ENCODE measurements at regions of chr11 and their contacts with region 1.

Region 1: GRCh38 chr11:12235947-12236743 is 125.8 kb downstream of the MICAL2 start:
- DNase-seq: peak in 1 of 2 experiments; percentile 68
- H3K4me3 ChIP-seq: no peak overlapping the region
- H3K4me3 Mint-ChIP-seq: no peak overlapping the region
- H3K27ac Mint-ChIP-seq: peak overlapping the region; percentile 75
- H3K4me1 ChIP-seq: peaks cover 68% of the 10 kb centered on the region
- H3K4me1 Mint-ChIP-seq: peaks cover 48% of the 10 kb centered on the region
- H3K27me3 ChIP-seq: no peaks in the 10 kb centered on the region
- H3K27me3 Mint-ChIP-seq: no peaks in the 10 kb centered on the region
- CTCF ChIP-seq: peak; percentile 62 to 70

Region 2: DNA sequence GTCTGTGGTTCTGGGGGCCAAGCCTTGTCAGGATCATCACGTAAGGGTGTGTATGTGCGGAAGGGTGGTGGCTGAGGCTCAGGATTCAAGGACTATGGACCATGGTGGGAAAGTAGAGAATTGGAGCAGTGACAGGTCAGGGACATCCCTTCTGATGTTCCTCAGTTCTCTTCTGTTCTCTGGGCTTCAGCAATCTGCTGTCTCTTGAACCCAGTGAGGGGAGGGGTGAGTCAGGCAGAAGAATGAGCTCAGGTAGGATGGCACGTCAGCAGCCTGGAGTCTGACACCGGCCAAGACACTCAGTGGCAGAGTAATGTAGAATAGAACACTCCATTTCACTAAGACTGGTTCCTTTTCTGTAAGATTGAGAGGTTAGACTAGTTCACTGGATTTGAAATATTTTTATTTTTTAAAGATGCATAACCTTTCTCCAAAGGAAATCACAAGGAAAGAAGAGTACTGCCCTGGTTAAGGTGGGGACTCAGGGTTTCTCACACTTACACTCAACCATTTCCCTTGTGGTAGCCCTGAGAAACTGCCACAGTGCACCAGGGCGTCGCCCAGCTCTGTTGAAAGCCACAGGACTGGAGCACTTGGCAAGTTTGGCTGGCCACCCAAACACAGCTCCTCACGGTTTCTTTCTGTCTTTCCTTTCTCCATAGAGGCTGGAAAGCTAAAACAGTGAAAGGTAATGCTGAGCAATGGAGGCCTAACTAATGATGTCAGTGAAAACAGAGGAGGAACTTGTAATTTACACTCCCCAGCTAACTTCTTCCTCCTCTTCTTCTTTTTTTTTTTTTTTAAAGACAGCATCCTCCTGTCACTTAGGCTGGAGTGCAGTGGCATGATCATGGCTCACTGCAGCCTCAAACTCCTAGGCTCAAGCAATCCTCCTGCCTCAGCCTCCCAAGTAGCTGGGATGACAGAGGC is 148.8 kb before region 1 on chr11:
- CTCF ChIA-PET with region 1: interaction called, 10 read pairs
- POLR2A ChIA-PET with region 1: no interaction called
- intact Hi-C with region 1: loop called (anchors 1 kb)
- DNase-seq: peak; percentile 34 to 42
- H3K4me3 ChIP-seq: no peak overlapping the region
- H3K4me3 Mint-ChIP-seq: no peak overlapping the region
- H3K27ac Mint-ChIP-seq: peak overlapping the region; percentile 78
- H3K4me1 ChIP-seq: peaks cover 73% of the 10 kb centered on the region
- H3K4me1 Mint-ChIP-seq: peaks cover 60% of the 10 kb centered on the region
- H3K27me3 ChIP-seq: no peaks in the 10 kb centered on the region
- H3K27me3 Mint-ChIP-seq: no peaks in the 10 kb centered on the region
- CTCF ChIP-seq: peak; percentile 7 to 11

Region 3: DNA sequence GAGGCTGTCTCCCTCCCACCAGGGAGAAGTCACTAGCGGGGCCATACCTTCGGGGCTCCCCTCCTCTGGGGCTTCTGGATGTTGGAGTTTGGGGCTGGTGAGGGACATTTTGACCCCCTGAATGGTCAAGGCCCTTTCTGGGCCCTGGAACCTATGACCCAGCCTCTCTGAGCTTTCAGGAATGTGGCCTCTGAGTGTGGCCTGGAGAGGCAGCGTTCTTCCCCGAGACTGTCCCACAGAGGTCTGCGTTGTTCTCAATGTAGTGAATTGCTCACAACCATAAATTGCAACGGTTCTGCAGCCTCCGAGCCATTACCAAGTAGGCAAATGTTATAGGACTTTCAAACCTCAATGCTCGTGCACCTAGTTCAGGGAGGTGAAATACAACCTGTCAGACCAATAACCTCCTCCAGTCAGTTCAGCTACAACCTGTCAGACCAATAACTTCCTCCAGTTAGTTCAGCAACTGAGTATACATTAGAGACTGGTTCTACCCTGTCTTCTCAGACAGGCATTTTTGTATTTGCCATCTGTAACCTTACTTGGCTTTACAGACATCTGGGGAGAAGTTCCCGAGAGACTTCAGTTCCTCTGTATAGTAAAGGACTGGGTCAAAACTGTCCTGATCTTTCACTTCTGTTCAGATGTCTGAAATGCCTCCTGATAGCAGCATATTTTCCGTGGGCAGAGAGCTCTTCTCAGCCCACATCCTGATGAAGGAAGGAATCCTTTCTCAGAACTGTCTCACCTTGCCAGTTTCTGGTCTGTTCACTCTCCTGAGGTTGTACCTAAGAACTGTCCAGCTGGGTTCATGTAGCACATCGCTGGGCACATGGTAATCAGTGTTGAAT is 91.6 kb before region 1 on chr11:
- CTCF ChIA-PET with region 1: interaction called, 5 read pairs
- POLR2A ChIA-PET with region 1: no interaction called
- intact Hi-C with region 1: loop called (anchors 1 kb)
- DNase-seq: peak; percentile 63 to 79
- H3K4me3 ChIP-seq: no peak overlapping the region
- H3K4me3 Mint-ChIP-seq: peak overlapping the region; percentile 57
- H3K27ac Mint-ChIP-seq: peak overlapping the region; percentile 83
- H3K4me1 ChIP-seq: peaks cover 79% of the 10 kb centered on the region
- H3K4me1 Mint-ChIP-seq: peaks cover 65% of the 10 kb centered on the region
- H3K27me3 ChIP-seq: no peaks in the 10 kb centered on the region
- H3K27me3 Mint-ChIP-seq: no peaks in the 10 kb centered on the region
- CTCF ChIP-seq: no peak

Region 4: DNA sequence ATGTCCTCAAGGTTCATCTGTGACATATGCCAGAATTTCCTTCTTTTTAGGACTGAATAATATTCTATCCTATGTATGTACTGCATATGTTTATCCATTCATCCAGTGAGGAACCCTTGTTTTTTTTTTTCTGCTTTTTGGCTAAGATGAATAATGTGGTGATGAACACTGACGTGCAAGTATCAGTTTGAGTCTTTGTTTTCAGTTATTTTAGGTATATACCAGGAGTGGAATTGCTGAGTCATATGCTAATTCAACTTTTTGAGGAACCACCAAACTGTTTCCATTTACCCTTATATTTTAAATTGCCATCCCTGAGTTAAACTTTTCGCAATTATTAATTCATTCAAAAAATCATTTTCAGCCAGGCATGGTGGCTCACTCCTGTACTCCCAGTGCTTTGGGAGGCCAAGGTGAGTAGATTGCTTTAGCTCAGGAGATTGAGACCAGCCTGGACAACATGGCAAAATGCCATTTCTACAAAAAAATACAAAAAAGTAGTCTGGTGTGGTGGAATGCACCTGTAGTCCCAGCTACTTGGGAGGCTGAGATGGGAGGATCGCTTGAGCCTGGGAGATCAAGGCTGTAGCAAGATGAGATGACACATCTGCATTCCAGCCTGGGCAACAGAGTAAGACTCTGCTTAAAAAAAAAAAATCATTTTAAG is 61.5 kb before region 1 on chr11:
- CTCF ChIA-PET with region 1: interaction called, 3 read pairs
- POLR2A ChIA-PET with region 1: no interaction called
- intact Hi-C with region 1: loop called (anchors 1 kb)
- DNase-seq: no peak
- H3K4me3 ChIP-seq: no peak overlapping the region
- H3K4me3 Mint-ChIP-seq: no peak overlapping the region
- H3K27ac Mint-ChIP-seq: peak overlapping the region; percentile 94
- H3K4me1 ChIP-seq: peaks cover 73% of the 10 kb centered on the region
- H3K4me1 Mint-ChIP-seq: peaks cover 45% of the 10 kb centered on the region
- H3K27me3 ChIP-seq: no peaks in the 10 kb centered on the region
- H3K27me3 Mint-ChIP-seq: no peaks in the 10 kb centered on the region
- CTCF ChIP-seq: no peak

Region 5: DNA sequence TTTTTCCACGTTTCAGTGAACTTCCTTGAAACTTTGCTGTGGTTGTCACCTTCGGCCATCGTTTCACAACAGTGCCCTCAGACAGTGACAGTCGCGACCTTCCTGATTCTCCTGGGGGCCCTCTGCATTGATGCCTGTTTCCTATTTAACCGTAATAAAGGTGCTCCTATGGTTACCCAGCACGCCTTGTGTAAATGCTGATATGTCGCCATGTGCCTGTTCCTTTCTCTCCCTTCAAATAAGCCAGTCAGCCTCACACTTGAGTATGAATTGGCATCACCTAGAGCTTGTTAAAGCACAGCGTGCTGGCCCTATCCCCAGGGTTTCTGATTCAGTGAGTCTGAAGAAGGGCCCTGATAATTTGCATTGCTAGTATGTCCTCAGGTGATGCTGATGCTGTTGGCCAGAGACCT is 21.0 kb before region 1 on chr11:
- CTCF ChIA-PET with region 1: interaction called, 3 read pairs
- POLR2A ChIA-PET with region 1: no interaction called
- intact Hi-C with region 1: loop called (anchors 2 kb)
- DNase-seq: peak; percentile 60 to 61
- H3K4me3 ChIP-seq: no peak overlapping the region
- H3K4me3 Mint-ChIP-seq: no peak overlapping the region
- H3K27ac Mint-ChIP-seq: peak overlapping the region; percentile 87
- H3K4me1 ChIP-seq: peaks cover 56% of the 10 kb centered on the region
- H3K4me1 Mint-ChIP-seq: peaks cover 53% of the 10 kb centered on the region
- H3K27me3 ChIP-seq: no peaks in the 10 kb centered on the region
- H3K27me3 Mint-ChIP-seq: no peaks in the 10 kb centered on the region
- CTCF ChIP-seq: no peak

Region 6: GRCh38 chr11:12248338-12248737 is 12.2 kb after region 1 on chr11:
- CTCF ChIA-PET with region 1: interaction called, 11 read pairs
- POLR2A ChIA-PET with region 1: no interaction called
- intact Hi-C with region 1: loop called (anchors 1 kb)
- DNase-seq: peak; percentile 97 to 99
- H3K4me3 ChIP-seq: no peak overlapping the region
- H3K4me3 Mint-ChIP-seq: peak overlapping the region; percentile 58
- H3K27ac Mint-ChIP-seq: peak overlapping the region; percentile 85
- H3K4me1 ChIP-seq: peaks cover 79% of the 10 kb centered on the region
- H3K4me1 Mint-ChIP-seq: peaks cover 43% of the 10 kb centered on the region
- H3K27me3 ChIP-seq: no peaks in the 10 kb centered on the region
- H3K27me3 Mint-ChIP-seq: no peaks in the 10 kb centered on the region
- CTCF ChIP-seq: no peak

Region 7: DNA sequence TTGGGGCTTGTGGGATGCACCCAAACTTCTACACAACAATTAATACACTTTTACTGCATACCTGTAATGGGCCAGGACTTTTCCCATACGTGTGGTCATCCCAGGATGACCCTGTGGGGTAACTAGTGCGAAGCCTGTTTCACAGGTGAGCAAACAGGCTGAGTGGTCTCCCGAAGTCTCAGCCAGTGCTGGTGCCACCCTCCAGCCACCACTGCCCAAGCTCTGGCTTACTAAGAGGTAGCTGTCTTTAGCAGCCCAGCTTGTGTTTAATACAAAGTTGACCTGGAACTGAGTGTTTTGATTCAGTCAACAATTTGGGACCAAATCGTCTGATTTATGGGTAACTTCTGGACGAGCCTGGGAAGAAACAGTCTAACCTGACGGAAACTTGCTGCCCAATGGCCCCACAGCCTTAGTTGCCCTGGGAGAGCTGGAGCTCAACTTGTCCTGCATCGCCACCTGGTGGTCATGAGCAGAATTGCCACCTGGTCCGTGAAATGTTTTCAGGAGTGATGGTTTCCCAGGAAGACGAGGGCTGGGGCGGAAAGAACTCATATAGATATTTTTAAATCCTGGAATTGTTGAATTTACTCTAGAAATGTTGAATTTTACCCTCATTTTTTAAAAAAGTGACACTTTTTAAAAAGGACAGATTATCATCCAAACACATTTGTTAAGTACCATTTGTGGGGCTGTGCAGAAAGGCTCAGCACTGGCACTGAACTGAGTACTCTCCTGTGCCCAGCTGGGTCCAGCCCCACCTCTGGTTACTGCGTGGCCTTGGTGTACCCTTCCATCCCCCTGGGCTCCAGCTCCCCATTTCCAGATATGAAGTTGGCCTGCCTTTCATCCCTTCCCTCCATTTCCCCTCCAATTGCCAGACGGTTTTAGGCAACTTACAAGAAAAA is 45.7 kb after region 1 on chr11:
- CTCF ChIA-PET with region 1: interaction called, 4 read pairs
- POLR2A ChIA-PET with region 1: no interaction called
- intact Hi-C with region 1: loop called (anchors 2 kb)
- DNase-seq: peak; percentile 84 to 89
- H3K4me3 ChIP-seq: no peak overlapping the region
- H3K4me3 Mint-ChIP-seq: no peak overlapping the region
- H3K27ac Mint-ChIP-seq: peak overlapping the region; percentile 83
- H3K4me1 ChIP-seq: peaks cover 36% of the 10 kb centered on the region
- H3K4me1 Mint-ChIP-seq: peaks cover 39% of the 10 kb centered on the region
- H3K27me3 ChIP-seq: no peaks in the 10 kb centered on the region
- H3K27me3 Mint-ChIP-seq: no peaks in the 10 kb centered on the region
- CTCF ChIP-seq: peak; percentile 91 to 97

Measured in Caco-2 (cell line).